ENCODE measurements at regions of chr10 and their contacts with region 1.

Region 1: GRCh38 chr10:63268798-63269503 is 135.8 kb downstream of the NRBF2 start:
- DNase-seq: peak; percentile 97
- ATAC-seq: peak; percentile 80
- H3K4me3 ChIP-seq: peak overlapping the region; percentile 55
- H3K27ac ChIP-seq: peak overlapping the region; percentile 87
- H3K4me1 ChIP-seq: peaks cover 4% of the 10 kb centered on the region
- H3K27me3 ChIP-seq: no peaks in the 10 kb centered on the region
- CTCF ChIP-seq: peak; percentile 17; the same call in 1 of the 2 replicates
- POLR2A ChIP-seq: peak; percentile 98
- RAD21 ChIP-seq: peak; percentile 8; the same call in 1 of the 2 replicates

Region 2: DNA sequence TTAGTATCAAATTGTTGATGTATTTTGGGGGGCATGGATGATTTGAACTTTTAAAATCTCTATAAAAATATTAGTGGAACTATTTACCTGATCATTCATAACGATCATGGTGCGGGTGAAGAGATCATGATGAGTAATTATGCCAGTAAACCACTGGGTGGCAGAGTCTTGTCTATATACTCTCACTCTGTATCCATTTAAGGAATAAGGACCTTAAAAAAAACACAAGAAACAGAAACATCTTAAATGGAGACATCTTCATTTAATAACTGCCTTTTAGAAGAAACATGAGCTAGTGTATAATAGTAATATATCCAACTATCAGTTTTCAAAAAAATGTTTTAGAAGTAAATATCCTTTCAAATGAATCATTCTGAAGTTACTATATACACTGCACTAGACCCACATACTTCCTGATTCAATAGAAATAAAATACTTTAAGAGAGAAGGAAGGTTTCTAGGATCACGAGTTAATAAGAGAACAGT is 51.8 kb before region 1 on chr10:
- CTCF ChIA-PET with region 1: interaction called, 3 read pairs
- POLR2A ChIA-PET with region 1: no interaction called
- dilution Hi-C with region 1: no loop called
- in situ Hi-C with region 1: no loop called
- intact Hi-C with region 1: loop called (anchors 2 kb)
- DNase-seq: peak; percentile 77
- ATAC-seq: peak; percentile 95
- H3K4me3 ChIP-seq: no peak overlapping the region
- H3K27ac ChIP-seq: no peak overlapping the region
- H3K4me1 ChIP-seq: no peaks in the 10 kb centered on the region
- H3K27me3 ChIP-seq: no peaks in the 10 kb centered on the region
- CTCF ChIP-seq: peak; percentile 66
- POLR2A ChIP-seq: no peak
- RAD21 ChIP-seq: peak; percentile 65

Region 3: DNA sequence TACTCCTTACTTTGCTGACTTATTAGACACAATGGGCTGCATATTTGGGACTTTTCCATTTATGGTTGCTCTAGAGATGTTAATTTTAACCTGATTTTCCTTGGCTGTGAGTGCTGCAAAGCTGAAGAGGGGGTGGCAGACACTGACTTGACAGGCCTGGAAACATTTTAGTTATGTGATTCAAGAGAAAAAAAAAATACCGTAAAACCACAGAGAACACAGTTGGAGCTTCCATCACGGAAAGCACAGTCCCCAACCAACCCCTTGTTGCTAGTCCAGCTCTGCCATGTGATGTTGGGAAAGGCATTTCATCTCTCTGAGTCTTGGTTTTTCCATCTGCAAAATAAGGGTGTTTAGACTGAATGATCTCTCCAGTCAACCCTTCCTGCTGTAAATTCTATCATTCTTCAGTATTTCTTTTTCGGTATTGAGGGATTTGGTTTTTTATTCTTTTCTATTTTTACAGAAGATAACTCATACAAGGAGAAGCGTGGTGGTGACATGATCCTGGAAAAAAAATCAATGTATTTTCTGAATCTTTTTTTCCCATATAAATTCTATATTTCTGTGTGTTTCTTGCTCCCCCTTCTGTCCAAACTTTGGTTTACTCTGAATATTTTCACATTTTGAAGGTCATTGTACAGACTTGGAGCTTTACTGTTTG is 498.3 kb after region 1 on chr10:
- CTCF ChIA-PET with region 1: no interaction called
- POLR2A ChIA-PET with region 1: no interaction called
- dilution Hi-C with region 1: no loop called
- in situ Hi-C with region 1: no loop called
- intact Hi-C with region 1: loop called (anchors 1 kb)
- DNase-seq: peak; percentile 29
- ATAC-seq: peak; percentile 69
- H3K4me3 ChIP-seq: no peak overlapping the region
- H3K27ac ChIP-seq: no peak overlapping the region
- H3K4me1 ChIP-seq: peaks cover 4% of the 10 kb centered on the region; the same call in 1 of the 2 replicates
- H3K27me3 ChIP-seq: peaks cover 9% of the 10 kb centered on the region
- CTCF ChIP-seq: peak; percentile 55
- POLR2A ChIP-seq: no peak
- RAD21 ChIP-seq: peak; percentile 47

Measured in IMR-90 (cell line).